Right lobe of liver (tissue), 6 donors: ENCODE measurements at regions of chr17 and their contacts with region 1.

Region 1: GRCh38 chr17:794876-795275 is 12.7 kb downstream of the MRM3 start:
- DNase-seq: peak; percentile 81 to 87 (median 83)
- ATAC-seq: peak; percentile 92 to 98 (median 94)
- H3K4me3 ChIP-seq: peak overlapping the region in 1 of 3 donors; percentile 18
- H3K27ac ChIP-seq: peak overlapping the region in 1 of 3 donors; percentile 5
- H3K4me1 ChIP-seq: peaks cover 0 to 4% (median 0%) of the 10 kb centered on the region in 4 donors
- H3K27me3 ChIP-seq: no peaks in the 10 kb centered on the region
- CTCF ChIP-seq: peak; percentile 76 to 92 (median 88)
- POLR2A ChIP-seq: no peak

Region 2: DNA sequence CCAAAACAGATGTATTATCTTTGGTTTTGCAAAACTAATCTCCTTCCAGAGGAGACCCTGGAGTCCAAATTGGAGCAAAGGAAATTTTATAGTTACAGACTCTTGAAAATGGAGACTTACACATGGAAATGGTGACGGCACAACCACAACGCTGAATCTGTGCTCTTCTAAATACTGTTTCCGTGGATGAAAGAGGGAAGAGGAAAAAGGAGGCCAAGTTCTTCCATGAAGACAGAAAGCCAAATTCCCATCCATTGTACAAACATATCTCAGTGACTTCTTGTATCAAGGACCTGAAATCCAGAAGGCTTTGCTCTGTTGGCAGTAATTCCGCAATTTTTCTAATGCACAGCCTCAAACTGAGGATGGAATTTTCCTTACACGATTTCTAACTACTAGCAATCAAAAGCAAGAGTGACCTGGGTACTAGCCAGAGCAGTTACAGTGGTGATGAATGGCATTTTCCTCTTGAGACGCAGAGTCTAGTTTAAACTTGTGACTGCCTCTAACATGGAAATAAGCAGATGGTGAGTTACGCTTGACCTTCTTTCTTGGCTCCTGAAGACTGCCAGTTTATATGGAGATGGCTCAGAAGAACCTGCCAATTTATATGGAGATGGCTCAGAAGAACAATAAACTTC is 118.7 kb before region 1 on chr17:
- intact Hi-C with region 1: no loop called
- DNase-seq: no peak
- ATAC-seq: no peak
- H3K4me3 ChIP-seq: no peak overlapping the region
- H3K27ac ChIP-seq: no peak overlapping the region
- H3K4me1 ChIP-seq: no peaks in the 10 kb centered on the region
- H3K27me3 ChIP-seq: no peaks in the 10 kb centered on the region
- CTCF ChIP-seq: no peak
- POLR2A ChIP-seq: no peak

Region 3: DNA sequence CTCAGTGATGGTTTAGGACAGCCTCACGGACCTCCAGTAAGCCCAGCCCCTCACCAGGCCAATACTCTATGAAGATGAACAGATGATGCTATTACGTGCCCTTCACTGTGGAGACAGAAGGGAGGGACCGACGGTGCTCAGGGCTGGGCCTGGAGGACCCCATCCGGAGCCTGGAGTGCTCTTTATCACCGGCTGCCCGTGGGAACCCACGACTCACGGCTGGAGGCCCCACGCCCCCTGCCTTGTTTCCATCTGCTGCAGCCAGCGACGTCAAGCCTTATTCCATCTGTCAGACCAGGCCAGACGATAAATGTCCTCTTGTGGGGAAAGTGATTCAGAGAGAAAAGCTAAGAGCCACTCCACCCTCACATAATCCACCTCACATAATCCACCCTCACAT is 198.1 kb after region 1 on chr17:
- intact Hi-C with region 1: loop called (anchors 5 kb)
- DNase-seq: no peak
- ATAC-seq: no peak
- H3K4me3 ChIP-seq: no peak overlapping the region
- H3K27ac ChIP-seq: no peak overlapping the region
- H3K4me1 ChIP-seq: peaks cover 0 to 10% (median 3%) of the 10 kb centered on the region in 4 donors
- H3K27me3 ChIP-seq: no peaks in the 10 kb centered on the region
- CTCF ChIP-seq: no peak
- POLR2A ChIP-seq: no peak

Region 4: DNA sequence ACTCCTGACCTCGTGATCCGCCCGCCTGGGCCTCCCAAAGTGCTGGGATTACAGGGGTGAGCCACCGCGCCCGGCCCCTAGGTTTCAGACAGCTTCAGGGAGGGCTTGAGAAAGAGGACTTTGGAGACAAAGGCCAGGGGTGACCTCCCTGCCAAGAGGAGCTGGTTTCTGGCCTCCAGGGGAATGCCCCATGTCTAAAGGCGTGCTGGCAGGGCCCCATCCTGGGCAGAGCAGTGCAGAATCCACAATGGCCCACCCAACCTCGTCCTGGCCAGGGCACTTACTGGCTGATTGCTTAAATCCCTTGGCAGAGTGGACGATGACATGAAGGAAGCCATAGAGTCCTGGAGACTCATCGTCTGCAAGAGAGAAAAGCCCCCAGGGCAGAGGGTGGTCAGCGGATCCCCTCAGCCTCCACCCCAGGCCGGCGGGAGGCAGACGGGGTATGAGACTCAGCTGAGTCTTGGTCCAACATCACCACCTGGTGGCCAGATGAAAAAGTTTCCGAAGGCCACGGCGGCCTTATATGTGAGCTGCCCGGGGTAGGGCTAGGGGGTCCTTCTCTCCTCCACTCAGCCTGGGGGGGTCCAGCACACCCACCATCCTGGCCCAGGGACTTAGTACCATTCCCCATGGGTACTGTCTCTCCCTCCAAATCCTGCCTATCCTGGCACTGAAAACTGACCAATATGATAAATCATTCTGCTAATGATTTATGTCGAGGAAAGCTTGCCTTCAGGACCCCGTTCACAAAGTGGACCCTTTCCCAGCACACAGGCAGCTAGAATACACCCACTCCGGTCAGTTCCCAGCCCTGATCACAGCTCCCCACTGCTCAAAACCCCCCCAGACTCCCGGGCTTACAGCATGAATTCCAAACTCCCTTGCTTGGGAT is 261.1 kb after region 1 on chr17:
- intact Hi-C with region 1: loop called in 1 of 2 experiments (anchors 10 kb)
- DNase-seq: peak in 2 of 3 donors; percentile 47 to 64
- ATAC-seq: peak; percentile 74 to 83 (median 76)
- H3K4me3 ChIP-seq: no peak overlapping the region
- H3K27ac ChIP-seq: no peak overlapping the region
- H3K4me1 ChIP-seq: no peaks in the 10 kb centered on the region
- H3K27me3 ChIP-seq: no peaks in the 10 kb centered on the region
- CTCF ChIP-seq: peak; percentile 57 to 76 (median 73)
- POLR2A ChIP-seq: no peak

Region 5: GRCh38 chr17:1087381-1088241 is 292.7 kb after region 1 on chr17:
- intact Hi-C with region 1: no loop called
- DNase-seq: peak; percentile 82 to 85 (median 85)
- ATAC-seq: peak; percentile 88 to 93 (median 90)
- H3K4me3 ChIP-seq: peak overlapping the region in 1 of 3 donors; percentile 8
- H3K27ac ChIP-seq: peak overlapping the region; percentile 22 to 60 (median 39)
- H3K4me1 ChIP-seq: peaks cover 0 to 10% (median 0%) of the 10 kb centered on the region in 4 donors
- H3K27me3 ChIP-seq: no peaks in the 10 kb centered on the region
- CTCF ChIP-seq: no peak
- POLR2A ChIP-seq: no peak